ENCODE measurements at regions of chr15 and their contacts with region 1.

Region 1: DNA sequence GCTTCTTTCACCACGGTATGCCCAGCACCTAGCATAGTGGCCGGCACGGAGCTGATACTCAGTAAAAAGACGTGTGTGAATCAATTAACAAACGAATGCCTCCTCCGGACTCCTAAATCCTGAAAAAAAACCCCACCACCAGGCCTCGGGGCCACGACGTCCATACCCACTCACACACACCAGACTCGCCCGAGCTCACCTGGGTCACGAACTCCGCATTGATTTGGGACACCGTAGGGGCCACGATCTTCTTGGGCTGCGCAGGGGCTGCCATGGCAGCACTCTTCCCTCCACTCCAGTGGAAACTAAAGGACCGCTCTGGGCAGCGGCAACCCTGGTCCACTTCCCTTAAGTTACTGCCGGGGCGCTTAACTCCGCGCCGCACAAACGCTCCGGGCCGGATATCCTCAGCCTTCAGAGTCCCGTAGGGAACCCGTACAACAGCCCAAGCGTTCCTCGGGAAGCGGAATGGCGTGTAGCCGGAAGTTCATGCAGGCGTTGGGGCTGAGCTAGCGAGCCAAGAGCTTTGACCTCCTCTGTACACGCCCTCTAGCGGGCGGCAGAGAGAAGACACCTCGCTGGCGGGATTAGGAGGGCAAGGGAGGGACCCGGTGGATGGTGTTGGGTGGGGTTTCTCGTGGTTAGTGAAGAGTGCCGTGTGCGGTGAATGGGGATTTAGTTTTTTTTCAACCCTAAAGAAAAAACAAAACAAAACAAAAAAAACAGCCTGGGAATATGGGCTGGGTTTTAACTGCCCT is at the start of gene AQR:
- DNase-seq: peak; percentile 89
- H3K4me3 Mint-ChIP-seq: peak within 1 kb of the TSS; percentile 98
- H3K27ac Mint-ChIP-seq: peak within 1 kb of the TSS; percentile 95
- H3K4me1 Mint-ChIP-seq: peaks cover 44% of the 10 kb centered on the region
- H3K27me3 Mint-ChIP-seq: no peaks in the 10 kb centered on the region
- total RNA-seq, gene AQR: 43.2 and 44.4 TPM in 2 replicates

Region 2: DNA sequence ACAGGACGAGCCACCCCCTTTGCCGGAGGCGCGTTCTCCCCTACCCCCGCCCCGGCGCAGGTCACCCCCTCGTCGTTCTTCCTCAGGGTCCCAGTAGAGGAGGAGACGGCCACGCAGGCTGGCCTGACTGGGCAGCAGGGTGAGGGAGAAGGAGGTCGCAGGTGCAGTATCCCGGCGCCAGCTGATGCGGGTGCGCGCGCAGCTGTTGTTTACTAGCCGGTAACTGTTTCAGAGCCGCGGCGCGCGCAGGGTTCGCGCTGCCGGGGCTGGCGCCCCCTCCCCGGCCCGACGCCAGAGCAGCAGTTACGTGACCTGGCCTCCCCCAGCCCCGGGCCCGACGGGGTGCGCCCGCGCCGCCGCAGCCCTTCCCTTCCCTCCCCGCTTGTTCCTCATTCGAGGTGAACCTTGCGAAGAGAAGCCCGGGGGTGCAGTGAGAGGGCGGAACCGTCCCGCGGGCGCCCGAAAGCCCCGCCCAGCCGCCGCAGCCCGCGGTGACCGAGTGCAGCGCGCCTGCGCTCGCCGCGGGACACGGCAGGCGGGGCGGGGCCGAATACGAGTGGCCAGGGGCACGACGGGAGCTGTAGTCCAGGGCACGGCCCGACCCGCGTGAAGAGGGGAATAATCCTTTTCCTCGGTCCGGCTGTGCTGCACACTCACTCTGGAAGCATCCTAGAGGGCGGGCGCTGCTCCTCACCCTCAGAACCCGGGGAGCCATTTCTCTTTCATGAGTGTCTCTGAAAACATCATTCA is 631.8 kb before region 1 on chr15 and contains the start of gene SLC12A6:
- intact Hi-C with region 1: loop called (anchors 5 kb)
- DNase-seq: peak; percentile 90
- H3K4me3 Mint-ChIP-seq: peak within 1 kb of the TSS; percentile 97
- H3K27ac Mint-ChIP-seq: peak within 1 kb of the TSS; percentile 97
- H3K4me1 Mint-ChIP-seq: peaks cover 66% of the 10 kb centered on the region
- H3K27me3 Mint-ChIP-seq: no peaks in the 10 kb centered on the region
- total RNA-seq, gene SLC12A6: 33.2 and 36.4 TPM in 2 replicates

Region 3: DNA sequence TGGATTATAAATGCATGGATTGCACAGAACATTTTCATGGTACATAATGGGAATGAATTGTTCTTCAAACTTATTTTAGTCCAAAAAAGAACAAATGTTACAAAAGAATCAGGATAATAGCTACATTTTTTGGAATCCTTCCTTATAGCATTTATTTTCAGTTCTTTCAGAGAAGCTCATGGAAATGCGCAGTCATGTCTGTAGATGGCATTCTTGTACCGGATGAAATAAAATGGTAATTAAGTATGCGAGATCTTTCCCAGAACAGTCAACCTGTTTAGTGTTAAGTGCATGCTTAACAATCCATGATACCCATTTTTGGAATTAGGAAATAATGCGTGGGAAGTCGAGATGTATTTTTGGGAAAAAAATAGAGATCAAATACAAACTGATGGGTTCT is 347.8 kb before region 1 on chr15:
- intact Hi-C with region 1: loop called (anchors 5 kb)
- DNase-seq: no peak
- H3K4me3 Mint-ChIP-seq: no peak overlapping the region
- H3K27ac Mint-ChIP-seq: no peak overlapping the region
- H3K4me1 Mint-ChIP-seq: no peaks in the 10 kb centered on the region
- H3K27me3 Mint-ChIP-seq: peaks cover 26% of the 10 kb centered on the region

Region 4: DNA sequence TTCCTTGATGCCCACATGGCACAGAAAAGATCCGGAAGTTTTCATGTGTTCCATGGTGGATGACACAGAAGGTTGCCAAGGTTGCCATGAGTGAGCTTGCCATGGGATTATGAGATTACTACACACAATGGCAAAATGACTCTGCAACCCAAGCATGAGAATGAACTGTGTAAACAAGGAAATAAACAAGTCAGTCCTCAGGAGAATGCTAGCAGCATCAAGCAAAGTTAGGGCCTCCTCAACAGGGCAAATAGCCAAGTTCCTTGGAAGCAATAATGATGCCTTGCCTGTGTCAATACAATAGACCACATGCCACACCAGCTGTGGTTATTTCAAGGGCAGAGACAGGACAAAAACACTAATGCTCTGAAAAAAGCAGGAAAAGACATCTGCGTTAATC is 41.8 kb before region 1 on chr15:
- intact Hi-C with region 1: loop called (anchors 5 kb)
- DNase-seq: no peak
- H3K4me3 Mint-ChIP-seq: no peak overlapping the region
- H3K27ac Mint-ChIP-seq: no peak overlapping the region
- H3K4me1 Mint-ChIP-seq: peaks cover 10% of the 10 kb centered on the region
- H3K27me3 Mint-ChIP-seq: no peaks in the 10 kb centered on the region

Region 5: DNA sequence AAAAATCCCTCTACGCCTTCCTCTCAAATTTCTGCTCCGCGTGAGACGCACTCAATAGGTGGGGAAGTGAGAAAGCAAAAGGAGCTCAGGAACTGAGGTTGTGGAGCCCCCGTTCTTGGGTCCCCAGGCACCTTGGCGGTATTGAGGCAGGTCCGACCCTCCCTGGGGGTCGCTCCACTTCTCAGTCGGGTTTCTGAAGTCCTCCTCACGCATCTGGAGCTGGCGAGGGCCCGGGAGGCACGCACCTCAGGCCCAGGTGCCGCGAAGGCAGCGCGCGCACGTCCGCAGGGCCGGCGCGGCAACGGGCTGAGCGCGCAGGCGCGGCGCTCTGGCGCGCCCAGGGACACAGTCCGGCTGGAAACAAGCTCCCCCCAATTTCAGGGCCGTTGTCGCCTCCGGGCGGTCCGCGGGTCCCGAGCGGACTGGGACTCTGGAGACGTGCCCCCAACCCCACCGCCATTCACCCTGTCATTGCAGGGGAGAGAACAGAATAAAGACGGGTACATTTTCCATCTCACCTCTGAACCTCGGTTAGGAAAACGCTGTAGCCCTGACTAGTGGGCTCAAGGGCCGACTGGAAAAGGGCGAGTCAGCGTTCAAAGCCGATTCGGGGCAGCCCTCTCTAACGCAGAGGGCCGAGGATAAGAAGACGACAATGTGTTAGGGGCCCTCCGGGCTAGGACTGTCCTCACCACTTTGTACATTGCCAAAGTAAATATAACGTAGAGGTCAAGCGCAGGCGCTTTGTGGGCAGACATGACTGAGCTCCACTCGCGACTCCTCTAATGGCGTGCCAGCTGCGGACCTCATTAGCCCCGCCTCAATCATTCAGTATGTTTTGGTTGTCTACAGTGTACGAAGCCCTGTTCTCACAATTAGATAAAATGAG is 18.7 kb after region 1 on chr15 and contains the start of gene ZNF770:
- intact Hi-C with region 1: loop called (anchors 1 kb)
- DNase-seq: peak; percentile 84
- H3K4me3 Mint-ChIP-seq: peak within 1 kb of the TSS; percentile 97
- H3K27ac Mint-ChIP-seq: peak within 1 kb of the TSS; percentile 96
- H3K4me1 Mint-ChIP-seq: peaks cover 44% of the 10 kb centered on the region
- H3K27me3 Mint-ChIP-seq: no peaks in the 10 kb centered on the region
- total RNA-seq, gene ZNF770: 50.1 and 50.6 TPM in 2 replicates